ENCODE measurements at regions of chr1 and their contacts with region 1.

Region 1: DNA sequence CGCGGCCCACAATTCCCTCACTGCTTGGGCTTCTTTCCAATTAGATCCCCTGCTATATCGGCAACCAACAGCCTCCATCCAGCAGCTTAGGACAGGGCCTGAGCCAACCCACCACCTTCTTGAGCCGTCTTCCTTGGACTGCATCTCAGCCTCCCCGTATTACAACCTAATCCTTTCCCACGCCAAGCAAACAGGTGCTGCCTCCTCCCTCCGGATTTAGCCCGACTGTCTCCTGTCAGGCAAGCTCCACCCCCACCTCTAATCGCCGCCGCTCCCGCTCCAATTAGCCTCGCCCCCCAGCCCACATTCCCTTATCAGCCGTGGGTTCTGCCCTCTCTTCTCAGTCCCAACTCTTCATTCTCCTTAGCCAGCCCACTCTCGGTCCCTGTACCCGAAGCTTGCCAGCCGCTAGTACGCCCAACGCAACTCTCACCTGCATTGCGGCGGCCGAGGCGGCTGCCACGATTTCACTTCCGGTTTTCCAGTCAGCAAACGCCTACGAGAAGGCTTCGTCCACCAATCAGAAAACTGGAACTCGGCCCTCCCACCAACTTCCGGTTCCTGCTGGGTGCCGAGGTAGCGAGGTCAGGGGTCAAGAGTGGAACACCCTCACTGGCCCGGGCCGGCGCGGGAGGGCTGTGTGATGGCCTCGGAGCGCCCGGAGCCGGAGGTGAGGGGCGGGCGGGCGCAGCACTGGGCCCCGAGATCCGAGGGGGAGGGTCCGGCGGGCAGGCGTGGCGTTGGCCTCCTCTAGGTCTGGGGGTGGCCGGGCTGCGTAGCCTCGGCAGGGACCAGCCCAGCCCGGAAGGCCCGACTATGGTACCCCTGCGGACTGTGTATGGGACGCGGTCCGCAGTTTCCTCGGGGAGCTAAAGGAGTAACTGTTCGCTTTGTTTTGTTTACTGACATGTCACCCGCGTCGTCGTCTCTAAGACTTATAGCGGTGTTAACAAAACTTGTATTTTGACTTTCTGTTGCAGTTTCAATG is at the starts of genes MED8 and SZT2:
- DNase-seq: peak; percentile 86 to 95 (median 92)
- ATAC-seq: peak; percentile 89
- H3K4me3 ChIP-seq: peak within 1 kb of the TSS; percentile 86
- H3K4me3 Mint-ChIP-seq: peak within 1 kb of the TSS; percentile 100
- H3K27ac ChIP-seq: peak within 1 kb of the TSS; percentile 55
- H3K27ac Mint-ChIP-seq: peak within 1 kb of the TSS; percentile 86
- H3K4me1 ChIP-seq: peaks cover 27% of the 10 kb centered on the region
- H3K4me1 Mint-ChIP-seq: peaks cover 44% of the 10 kb centered on the region
- H3K27me3 ChIP-seq: no peaks in the 10 kb centered on the region
- H3K27me3 Mint-ChIP-seq: no peaks in the 10 kb centered on the region
- CTCF ChIP-seq: no peak
- total RNA-seq, gene MED8: 14.8 to 17.6 TPM
- total RNA-seq, gene SZT2: 69.7 to 72.5 TPM

Region 2: GRCh38 chr1:43073490-43074230 is 316.0 kb before region 1 on chr1:
- CTCF ChIA-PET with region 1: no interaction called
- POLR2A ChIA-PET with region 1: no interaction called
- intact Hi-C with region 1: no loop called
- DNase-seq: peak; percentile 60 to 87 (median 68)
- ATAC-seq: peak; percentile 84
- H3K4me3 ChIP-seq: no peak overlapping the region
- H3K4me3 Mint-ChIP-seq: no peak overlapping the region
- H3K27ac ChIP-seq: no peak overlapping the region
- H3K27ac Mint-ChIP-seq: no peak overlapping the region
- H3K4me1 ChIP-seq: peaks cover 6% of the 10 kb centered on the region
- H3K4me1 Mint-ChIP-seq: peaks cover 15% of the 10 kb centered on the region
- H3K27me3 ChIP-seq: no peaks in the 10 kb centered on the region
- H3K27me3 Mint-ChIP-seq: no peaks in the 10 kb centered on the region
- CTCF ChIP-seq: peak; percentile 82

Region 3: DNA sequence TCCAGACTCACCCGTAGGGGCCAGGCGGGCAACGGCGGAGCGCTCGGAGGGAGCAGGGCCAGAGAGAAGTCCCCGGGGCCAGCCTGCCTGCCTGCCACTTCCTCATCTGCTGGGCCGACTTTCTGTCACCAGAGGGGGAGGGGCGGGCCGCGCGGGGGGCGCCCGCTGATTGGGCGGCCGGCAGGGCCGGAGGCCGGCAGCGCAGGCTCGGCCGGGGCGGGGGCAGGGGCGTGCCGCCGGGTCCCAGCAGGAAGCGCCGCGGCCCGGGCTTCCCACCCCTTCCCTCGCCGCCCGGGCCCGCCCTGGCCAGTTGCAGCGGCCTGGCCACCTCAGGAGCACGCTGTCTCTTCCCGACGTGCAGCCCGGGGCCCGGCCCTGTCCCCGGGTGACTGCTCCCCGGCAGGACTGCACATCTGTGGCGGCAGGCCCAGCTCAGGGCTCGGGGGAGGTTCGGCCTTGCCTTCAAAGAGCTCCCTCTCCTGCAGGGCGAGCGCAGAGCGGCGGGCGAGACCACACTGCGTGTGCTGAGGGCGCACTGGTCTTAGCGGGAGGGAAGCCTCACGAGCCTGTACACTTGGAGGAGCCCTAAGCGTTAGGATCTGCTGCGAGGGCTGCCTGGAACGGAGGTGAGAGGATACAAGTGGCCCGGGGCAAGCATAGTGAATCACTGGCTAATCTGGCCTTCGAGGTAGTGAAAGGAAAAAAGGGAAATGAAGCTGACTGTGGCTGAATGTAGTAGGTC is 21.5 kb before region 1 on chr1 and contains the start of gene ELOVL1:
- CTCF ChIA-PET with region 1: interaction called, 7 read pairs
- POLR2A ChIA-PET with region 1: interaction called, 24 read pairs
- intact Hi-C with region 1: loop called in 1 of 2 experiments (anchors 1 kb)
- DNase-seq: peak; percentile 54 to 92 (median 84)
- ATAC-seq: peak; percentile 68
- H3K4me3 ChIP-seq: peak within 1 kb of the TSS; percentile 87
- H3K4me3 Mint-ChIP-seq: peak within 1 kb of the TSS; percentile 92
- H3K27ac ChIP-seq: peak within 1 kb of the TSS; percentile 63 to 79
- H3K27ac Mint-ChIP-seq: peak within 1 kb of the TSS; percentile 94
- H3K4me1 ChIP-seq: peaks cover 35% of the 10 kb centered on the region
- H3K4me1 Mint-ChIP-seq: peaks cover 45% of the 10 kb centered on the region
- H3K27me3 ChIP-seq: no peaks in the 10 kb centered on the region
- H3K27me3 Mint-ChIP-seq: no peaks in the 10 kb centered on the region
- CTCF ChIP-seq: no peak
- total RNA-seq, gene ELOVL1: 28.7 to 31.2 TPM

Region 4: DNA sequence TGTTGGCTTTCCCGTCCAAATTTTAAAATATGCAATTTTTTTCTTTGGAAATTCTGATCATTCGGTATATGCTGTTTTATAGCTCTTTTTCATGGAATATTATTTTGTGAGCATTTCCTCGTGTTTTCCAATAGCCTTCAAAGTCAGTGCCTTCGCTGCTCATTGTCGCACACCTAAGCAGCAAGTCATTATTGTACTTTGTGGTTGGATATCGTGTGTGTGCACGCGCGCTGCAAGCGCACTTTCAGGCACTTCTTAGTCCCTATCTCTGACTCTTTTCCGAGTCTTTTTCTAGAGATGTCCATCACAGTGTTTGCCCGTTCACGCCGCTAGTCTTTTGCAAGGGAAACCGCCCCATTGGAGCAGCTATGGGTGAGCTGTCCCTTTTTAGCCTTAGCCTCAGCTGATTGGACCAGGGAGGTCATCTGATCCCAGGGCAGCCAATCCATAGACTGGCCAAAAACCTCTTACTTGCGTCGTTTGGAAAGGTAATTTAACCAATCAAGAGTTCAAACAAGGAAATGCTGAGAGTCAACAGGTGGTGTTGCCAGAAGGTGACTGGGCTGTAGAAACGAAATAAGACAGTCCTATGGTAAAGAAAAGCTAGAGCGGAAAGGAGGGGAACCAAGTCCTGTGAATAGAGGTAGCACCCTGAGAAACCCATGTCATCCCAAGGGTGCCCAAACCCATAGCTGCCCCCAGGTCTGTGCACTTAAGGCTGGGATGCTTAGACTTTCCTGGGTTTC is 64.8 kb after region 1 on chr1:
- CTCF ChIA-PET with region 1: no interaction called
- POLR2A ChIA-PET with region 1: interaction called, 9 read pairs
- intact Hi-C with region 1: loop called in 1 of 2 experiments (anchors 5 kb)
- DNase-seq: peak in 13 of 14 experiments; percentile 23 to 84 (median 44)
- ATAC-seq: peak; percentile 75
- H3K4me3 ChIP-seq: peak overlapping the region; percentile 65
- H3K4me3 Mint-ChIP-seq: peak overlapping the region; percentile 88
- H3K27ac ChIP-seq: no peak overlapping the region
- H3K27ac Mint-ChIP-seq: peak overlapping the region; percentile 85
- H3K4me1 ChIP-seq: peaks cover 18% of the 10 kb centered on the region
- H3K4me1 Mint-ChIP-seq: peaks cover 20% of the 10 kb centered on the region
- H3K27me3 ChIP-seq: peaks cover 0 to 6% of the 10 kb centered on the region in 2 experiments
- H3K27me3 Mint-ChIP-seq: peaks cover 12% of the 10 kb centered on the region
- CTCF ChIP-seq: no peak